GM12878 (cell line): ENCODE measurements at regions of chr2 and their contacts with region 1.

Region 1: DNA sequence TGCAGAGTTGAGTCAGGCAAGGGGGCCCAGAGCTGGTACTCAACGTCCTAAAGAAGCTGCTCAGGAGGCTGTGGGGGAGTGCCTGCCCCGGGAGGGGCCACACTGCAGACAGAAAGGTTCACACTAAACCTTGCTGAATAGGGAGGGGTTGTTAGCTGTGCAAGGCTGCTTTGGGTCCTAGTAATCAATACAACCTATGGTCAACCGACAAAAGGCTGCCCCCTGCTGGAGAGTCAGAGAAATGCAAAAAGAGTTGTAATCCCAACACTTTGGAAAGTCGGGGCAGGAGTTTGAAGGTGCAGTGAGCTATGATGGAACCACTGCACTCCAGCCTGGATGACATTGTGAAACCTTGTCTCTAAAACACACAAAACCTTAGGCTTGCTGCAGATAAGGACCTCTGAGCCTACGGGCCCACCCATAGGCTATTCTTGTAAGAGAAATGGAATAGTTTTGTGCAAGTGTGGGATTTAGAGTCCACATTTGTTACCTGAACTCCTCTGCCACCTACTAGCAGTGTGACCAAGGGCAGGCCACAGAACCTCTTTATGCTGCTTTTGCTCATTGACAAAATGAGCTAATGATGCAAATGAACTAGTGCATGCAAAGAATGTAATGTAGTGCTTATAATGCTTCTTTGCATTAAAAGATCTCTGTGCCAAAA is 81.5 kb downstream of the PRPF40A start:
- DNase-seq: no peak
- ATAC-seq: peak; percentile 89
- H3K4me3 ChIP-seq: no peak overlapping the region
- H3K27ac ChIP-seq: no peak overlapping the region
- H3K4me1 ChIP-seq: no peaks in the 10 kb centered on the region
- H3K27me3 ChIP-seq: no peaks in the 10 kb centered on the region
- CTCF ChIP-seq: peak; percentile 73 to 84 (median 75)
- EP300 ChIP-seq: no peak
- POLR2A ChIP-seq: no peak
- RAD21 ChIP-seq: peak; percentile 86

Region 2: GRCh38 chr2:152031747-152032306 is 603.9 kb before region 1 on chr2:
- CTCF ChIA-PET with region 1: interaction called, 47 read pairs
- POLR2A ChIA-PET with region 1: interaction called, 3 read pairs
- RAD21 ChIA-PET with region 1: interaction called, 4 read pairs
- SMC1A ChIA-PET with region 1: interaction called, 22 read pairs
- in situ Hi-C with region 1: loop called (anchors 5 kb)
- intact Hi-C with region 1: loop called (anchors 1 kb)
- DNase-seq: no peak
- ATAC-seq: peak; percentile 50
- H3K4me3 ChIP-seq: no peak overlapping the region
- H3K27ac ChIP-seq: no peak overlapping the region; the same call in 1 of the 2 replicates
- H3K4me1 ChIP-seq: peaks cover 19% of the 10 kb centered on the region
- H3K27me3 ChIP-seq: no peaks in the 10 kb centered on the region
- CTCF ChIP-seq: no peak
- EP300 ChIP-seq: no peak
- POLR2A ChIP-seq: no peak
- RAD21 ChIP-seq: no peak

Region 3: GRCh38 chr2:152183401-152184073 is 452.2 kb before region 1 on chr2:
- CTCF ChIA-PET with region 1: interaction called, 38 read pairs
- POLR2A ChIA-PET with region 1: no interaction called
- RAD21 ChIA-PET with region 1: interaction called, 8 read pairs
- SMC1A ChIA-PET with region 1: interaction called, 10 read pairs
- in situ Hi-C with region 1: no loop called
- intact Hi-C with region 1: no loop called
- DNase-seq: no peak
- ATAC-seq: no peak
- H3K4me3 ChIP-seq: no peak overlapping the region
- H3K27ac ChIP-seq: no peak overlapping the region
- H3K4me1 ChIP-seq: no peaks in the 10 kb centered on the region
- H3K27me3 ChIP-seq: no peaks in the 10 kb centered on the region
- CTCF ChIP-seq: no peak
- EP300 ChIP-seq: no peak
- POLR2A ChIP-seq: no peak
- RAD21 ChIP-seq: no peak

Region 4: DNA sequence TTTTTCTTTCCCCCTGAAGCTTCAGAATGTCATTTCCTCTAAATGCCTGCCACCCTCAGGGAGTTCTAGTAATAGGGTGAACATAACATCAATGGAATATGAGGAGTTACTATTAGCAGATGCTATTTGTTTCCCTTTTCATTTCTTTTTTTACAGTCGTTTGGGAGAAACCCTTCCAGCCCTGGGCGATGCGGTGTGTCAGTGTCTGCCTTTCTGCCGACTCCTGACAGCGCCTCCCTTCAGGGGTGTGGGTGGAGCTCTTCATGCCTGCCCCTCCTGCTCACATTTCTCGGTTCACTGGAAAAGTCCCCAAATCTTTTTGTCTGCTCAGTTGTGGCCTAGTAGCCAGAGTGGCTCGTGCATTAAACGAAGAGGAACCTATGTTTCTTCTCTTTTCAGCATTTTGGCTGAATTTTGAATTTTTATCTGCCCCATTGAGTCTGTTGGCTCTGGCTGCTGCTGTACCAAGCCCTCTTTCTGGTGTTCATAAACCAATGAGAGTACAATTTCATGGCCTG is 228.5 kb before region 1 on chr2:
- CTCF ChIA-PET with region 1: interaction called, 12 read pairs
- POLR2A ChIA-PET with region 1: no interaction called
- RAD21 ChIA-PET with region 1: interaction called, 4 read pairs
- SMC1A ChIA-PET with region 1: interaction called, 11 read pairs
- in situ Hi-C with region 1: no loop called
- intact Hi-C with region 1: no loop called
- DNase-seq: peak; percentile 55
- ATAC-seq: peak; percentile 95
- H3K4me3 ChIP-seq: peak overlapping the region; percentile 20; the same call in 1 of the 2 replicates
- H3K27ac ChIP-seq: peak overlapping the region; percentile 77
- H3K4me1 ChIP-seq: peaks cover 18% of the 10 kb centered on the region
- H3K27me3 ChIP-seq: no peaks in the 10 kb centered on the region
- CTCF ChIP-seq: 0 out of 6 replicates have a peak, but pooled peaks of 1 of the 3 experiments have one; percentile 1
- EP300 ChIP-seq: 0 out of 4 replicates have a peak, but pooled peaks of 1 of the 2 experiments have one; percentile 32
- POLR2A ChIP-seq: peak; percentile 50; the same call in 1 of the 2 replicates
- RAD21 ChIP-seq: no peak

Region 5: GRCh38 chr2:152566728-152567069 is 69.1 kb before region 1 on chr2:
- CTCF ChIA-PET with region 1: interaction called, 4 read pairs
- POLR2A ChIA-PET with region 1: no interaction called
- RAD21 ChIA-PET with region 1: interaction called, 4 read pairs
- SMC1A ChIA-PET with region 1: interaction called, 16 read pairs
- in situ Hi-C with region 1: no loop called
- intact Hi-C with region 1: no loop called
- DNase-seq: peak; percentile 64
- ATAC-seq: peak; percentile 54
- H3K4me3 ChIP-seq: no peak overlapping the region
- H3K27ac ChIP-seq: peak overlapping the region; percentile 65
- H3K4me1 ChIP-seq: peaks cover 28% of the 10 kb centered on the region
- H3K27me3 ChIP-seq: no peaks in the 10 kb centered on the region
- CTCF ChIP-seq: no peak
- EP300 ChIP-seq: 0 out of 4 replicates have a peak, but pooled peaks of 1 of the 2 experiments have one; percentile 45
- POLR2A ChIP-seq: no peak
- RAD21 ChIP-seq: no peak

Region 6: DNA sequence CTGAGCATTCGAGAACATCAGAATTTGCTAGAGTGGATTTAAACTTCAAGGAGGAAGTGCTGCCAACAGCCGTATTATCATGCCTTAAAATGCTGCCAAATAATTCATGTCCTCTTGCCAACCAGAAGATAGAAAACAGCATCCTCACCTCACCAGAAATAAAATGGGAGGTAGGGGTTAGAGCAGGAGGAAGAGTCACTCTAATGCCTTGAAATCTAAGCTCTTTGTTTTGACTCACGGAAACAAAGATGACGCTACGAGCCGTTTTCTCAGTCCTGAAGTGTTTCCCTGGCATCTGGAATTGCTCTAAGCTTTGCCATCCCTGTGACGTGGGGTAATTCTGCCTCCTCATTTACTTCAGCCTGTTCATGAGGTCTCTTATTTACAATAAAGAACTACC is 15.6 kb before region 1 on chr2:
- CTCF ChIA-PET with region 1: interaction called, 42 read pairs
- POLR2A ChIA-PET with region 1: no interaction called
- RAD21 ChIA-PET with region 1: interaction called, 19 read pairs
- SMC1A ChIA-PET with region 1: interaction called, 20 read pairs
- in situ Hi-C with region 1: no loop called
- intact Hi-C with region 1: no loop called
- DNase-seq: no peak
- ATAC-seq: no peak
- H3K4me3 ChIP-seq: no peak overlapping the region
- H3K27ac ChIP-seq: no peak overlapping the region
- H3K4me1 ChIP-seq: no peaks in the 10 kb centered on the region
- H3K27me3 ChIP-seq: no peaks in the 10 kb centered on the region
- CTCF ChIP-seq: no peak
- EP300 ChIP-seq: no peak
- POLR2A ChIP-seq: no peak
- RAD21 ChIP-seq: no peak

Region 7: GRCh38 chr2:152743002-152743401 is 107.2 kb after region 1 on chr2:
- CTCF ChIA-PET with region 1: interaction called, 18 read pairs
- POLR2A ChIA-PET with region 1: no interaction called
- RAD21 ChIA-PET with region 1: interaction called, 4 read pairs
- SMC1A ChIA-PET with region 1: interaction called, 8 read pairs
- in situ Hi-C with region 1: no loop called
- intact Hi-C with region 1: no loop called
- DNase-seq: no peak
- ATAC-seq: peak; percentile 86
- H3K4me3 ChIP-seq: no peak overlapping the region
- H3K27ac ChIP-seq: no peak overlapping the region
- H3K4me1 ChIP-seq: no peaks in the 10 kb centered on the region
- H3K27me3 ChIP-seq: no peaks in the 10 kb centered on the region
- CTCF ChIP-seq: peak; percentile 57 to 64 (median 57)
- EP300 ChIP-seq: no peak
- POLR2A ChIP-seq: no peak
- RAD21 ChIP-seq: peak; percentile 64

Region 8: DNA sequence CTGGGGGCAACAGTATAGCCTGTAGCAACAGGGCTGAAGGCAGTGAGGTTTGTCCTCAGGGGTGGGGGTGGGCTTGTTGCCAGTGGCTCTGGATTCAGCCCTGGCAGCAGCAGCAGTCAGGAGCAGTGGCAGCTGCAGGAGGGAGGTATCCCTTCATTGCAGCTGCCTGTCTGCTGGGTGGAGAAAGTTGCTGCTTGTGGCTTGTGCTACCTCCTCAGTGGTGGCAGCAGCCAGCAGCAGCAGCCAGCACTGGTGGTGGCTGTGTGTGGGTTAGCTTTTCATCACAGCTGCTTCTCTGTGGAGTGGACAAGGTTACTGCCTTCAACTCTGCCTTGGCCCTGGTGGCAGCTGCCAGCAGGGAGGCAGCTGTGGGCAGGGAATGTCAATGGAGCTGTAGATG is 177.6 kb after region 1 on chr2:
- CTCF ChIA-PET with region 1: no interaction called
- POLR2A ChIA-PET with region 1: no interaction called
- RAD21 ChIA-PET with region 1: no interaction called
- SMC1A ChIA-PET with region 1: no interaction called
- in situ Hi-C with region 1: no loop called
- intact Hi-C with region 1: no loop called
- DNase-seq: no peak
- ATAC-seq: no peak
- H3K4me3 ChIP-seq: no peak overlapping the region
- H3K27ac ChIP-seq: no peak overlapping the region
- H3K4me1 ChIP-seq: no peaks in the 10 kb centered on the region
- H3K27me3 ChIP-seq: no peaks in the 10 kb centered on the region
- CTCF ChIP-seq: no peak
- EP300 ChIP-seq: no peak
- POLR2A ChIP-seq: no peak
- RAD21 ChIP-seq: no peak